ENCODE measurements at regions of chr6 and their contacts with region 1.

Region 1: GRCh38 chr6:41934278-41935192 is 7.1 kb downstream of the CCND3 start:
- DNase-seq: no peak
- H3K4me3 ChIP-seq: no peak overlapping the region
- CTCF ChIP-seq: no peak

Region 2: DNA sequence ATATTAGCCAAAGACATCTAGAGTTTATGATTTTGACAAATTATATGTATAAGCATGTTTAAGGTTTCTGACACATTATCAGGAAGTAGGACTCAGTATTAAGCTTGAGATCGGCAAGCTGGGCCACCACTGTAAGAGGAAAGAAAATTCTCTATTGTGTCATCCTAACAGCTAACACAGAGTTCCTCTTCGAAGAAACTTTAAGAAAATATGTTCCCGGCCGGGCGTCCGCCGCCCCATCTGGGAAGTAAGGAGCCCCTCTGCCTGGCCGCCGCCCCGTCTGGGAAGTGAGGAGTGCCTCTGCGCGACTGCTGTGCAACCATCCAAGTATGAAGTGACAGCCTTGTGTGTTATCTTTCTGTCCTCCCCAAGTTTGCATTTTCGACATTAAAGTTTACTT is 62.4 kb before region 1 on chr6:
- in situ Hi-C with region 1: loop called (anchors 5 kb)
- DNase-seq: no peak
- H3K4me3 ChIP-seq: no peak overlapping the region
- CTCF ChIP-seq: no peak